ENCODE measurements at regions of chr11 and their contacts with region 1.

Region 1: GRCh38 chr11:33039274-33040032 is at the start of gene TCP11L1:
- DNase-seq: peak; percentile 89
- H3K4me3 Mint-ChIP-seq: peak within 1 kb of the TSS; percentile 87
- H3K27ac Mint-ChIP-seq: peak within 1 kb of the TSS; percentile 92
- H3K4me1 Mint-ChIP-seq: peaks cover 37% of the 10 kb centered on the region
- H3K27me3 Mint-ChIP-seq: peaks cover 10% of the 10 kb centered on the region
- total RNA-seq, gene TCP11L1: 10.0 to 11.4 TPM

Region 2: DNA sequence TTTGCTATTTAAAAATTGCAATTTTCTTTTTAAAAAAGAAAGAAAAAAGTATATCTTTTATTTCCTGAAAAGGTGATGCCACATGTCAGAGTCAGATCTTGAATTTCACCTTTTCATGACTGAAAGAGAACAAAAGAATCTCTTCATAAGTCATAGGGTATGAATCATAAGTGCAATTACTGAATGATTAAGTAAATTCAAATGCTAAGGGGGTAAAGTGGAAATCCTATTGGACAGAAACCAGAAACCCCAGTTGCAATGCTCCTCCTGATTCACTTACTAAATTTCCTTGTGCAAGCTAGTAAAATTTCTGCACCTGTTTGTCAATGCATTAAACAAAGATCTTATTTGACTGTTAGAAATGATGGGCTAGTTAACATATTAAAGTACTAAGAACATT is 217.9 kb before region 1 on chr11:
- CTCF ChIA-PET with region 1: no interaction called
- POLR2A ChIA-PET with region 1: no interaction called
- intact Hi-C with region 1: loop called (anchors 1 kb)
- DNase-seq: no peak
- H3K4me3 Mint-ChIP-seq: no peak overlapping the region
- H3K27ac Mint-ChIP-seq: no peak overlapping the region
- H3K4me1 Mint-ChIP-seq: peaks cover 20% of the 10 kb centered on the region
- H3K27me3 Mint-ChIP-seq: peaks cover 7% of the 10 kb centered on the region

Region 3: DNA sequence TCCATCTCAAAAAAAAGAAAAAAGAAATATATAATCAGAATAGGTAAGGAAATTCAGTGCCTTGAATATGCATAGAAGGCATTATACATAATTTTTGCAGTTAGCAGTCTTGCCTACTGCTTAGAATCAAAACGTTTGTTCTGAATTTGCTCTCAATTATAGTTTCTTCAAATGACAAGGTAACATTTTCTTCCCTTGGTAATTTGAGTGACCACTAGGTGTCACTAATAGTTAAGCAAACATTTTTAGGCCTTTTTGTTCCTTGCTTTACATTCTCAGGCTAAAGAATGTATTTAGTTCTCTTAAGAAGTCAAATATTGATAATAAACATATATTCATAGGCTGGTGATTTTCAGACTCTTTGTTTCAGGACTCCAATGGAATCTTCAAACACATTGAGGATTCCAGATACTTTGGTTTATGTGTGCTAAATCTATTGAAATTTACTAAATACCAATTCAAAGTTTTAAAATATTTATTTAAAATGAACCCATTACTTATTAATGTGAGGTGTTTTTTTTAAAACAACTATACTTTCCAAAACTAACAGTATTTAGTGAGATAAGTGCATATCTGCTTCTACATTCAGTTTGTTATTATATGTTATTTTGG is 78.8 kb before region 1 on chr11:
- CTCF ChIA-PET with region 1: interaction called, 5 read pairs
- POLR2A ChIA-PET with region 1: no interaction called
- intact Hi-C with region 1: loop called (anchors 1 kb)
- DNase-seq: no peak
- H3K4me3 Mint-ChIP-seq: no peak overlapping the region
- H3K27ac Mint-ChIP-seq: no peak overlapping the region
- H3K4me1 Mint-ChIP-seq: peaks cover 9% of the 10 kb centered on the region
- H3K27me3 Mint-ChIP-seq: no peaks in the 10 kb centered on the region

Region 4: DNA sequence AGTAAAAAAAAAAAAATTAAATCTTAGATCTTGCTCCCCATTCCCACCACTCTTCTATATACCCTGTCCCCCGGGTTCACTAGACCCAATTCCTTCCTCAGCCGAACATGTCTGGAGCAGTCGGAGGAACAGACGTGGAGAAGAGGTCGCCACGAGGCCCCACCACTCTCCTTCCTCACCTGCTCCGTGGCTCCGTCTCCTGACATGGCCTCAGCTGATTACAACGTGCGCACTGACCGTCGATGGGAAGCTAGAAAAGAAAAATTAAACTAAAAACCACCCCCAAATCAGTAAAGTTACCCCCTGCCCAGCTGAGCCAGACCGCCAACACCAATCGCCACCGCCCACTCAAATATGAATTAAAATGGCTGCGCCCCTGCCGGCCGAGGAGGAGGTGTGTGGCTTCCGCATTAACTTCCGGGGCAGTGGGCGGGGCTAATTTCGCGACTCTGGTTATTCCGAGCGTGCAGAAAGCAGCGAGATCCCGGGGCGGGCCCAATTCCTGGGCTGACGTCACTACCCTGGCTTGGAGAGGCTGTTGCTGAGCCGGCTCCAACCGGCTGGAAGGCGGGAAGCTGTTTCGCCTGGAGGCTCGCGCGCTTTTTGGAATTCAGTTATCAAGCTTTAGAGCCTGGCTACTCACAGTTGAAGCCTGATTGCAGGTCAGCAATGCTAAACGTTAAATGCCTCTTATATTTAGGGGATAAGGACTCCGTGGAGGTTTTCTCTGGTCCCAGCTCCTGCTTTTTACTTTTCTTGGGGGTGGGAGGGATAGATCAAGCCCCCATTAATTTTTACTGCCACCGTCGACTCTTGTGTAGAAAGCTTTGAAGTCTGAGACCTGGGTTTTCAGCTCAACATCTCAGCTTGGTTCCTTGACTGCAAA is 121.9 kb after region 1 on chr11 and contains the start of gene CSTF3:
- CTCF ChIA-PET with region 1: no interaction called
- POLR2A ChIA-PET with region 1: interaction called, 5 read pairs
- intact Hi-C with region 1: loop called (anchors 5 kb)
- DNase-seq: peak; percentile 99
- H3K4me3 Mint-ChIP-seq: peak within 1 kb of the TSS; percentile 99
- H3K27ac Mint-ChIP-seq: peak within 1 kb of the TSS; percentile 95
- H3K4me1 Mint-ChIP-seq: peaks cover 40% of the 10 kb centered on the region
- H3K27me3 Mint-ChIP-seq: no peaks in the 10 kb centered on the region
- total RNA-seq, gene CSTF3: 31.7 to 33.7 TPM

Region 5: DNA sequence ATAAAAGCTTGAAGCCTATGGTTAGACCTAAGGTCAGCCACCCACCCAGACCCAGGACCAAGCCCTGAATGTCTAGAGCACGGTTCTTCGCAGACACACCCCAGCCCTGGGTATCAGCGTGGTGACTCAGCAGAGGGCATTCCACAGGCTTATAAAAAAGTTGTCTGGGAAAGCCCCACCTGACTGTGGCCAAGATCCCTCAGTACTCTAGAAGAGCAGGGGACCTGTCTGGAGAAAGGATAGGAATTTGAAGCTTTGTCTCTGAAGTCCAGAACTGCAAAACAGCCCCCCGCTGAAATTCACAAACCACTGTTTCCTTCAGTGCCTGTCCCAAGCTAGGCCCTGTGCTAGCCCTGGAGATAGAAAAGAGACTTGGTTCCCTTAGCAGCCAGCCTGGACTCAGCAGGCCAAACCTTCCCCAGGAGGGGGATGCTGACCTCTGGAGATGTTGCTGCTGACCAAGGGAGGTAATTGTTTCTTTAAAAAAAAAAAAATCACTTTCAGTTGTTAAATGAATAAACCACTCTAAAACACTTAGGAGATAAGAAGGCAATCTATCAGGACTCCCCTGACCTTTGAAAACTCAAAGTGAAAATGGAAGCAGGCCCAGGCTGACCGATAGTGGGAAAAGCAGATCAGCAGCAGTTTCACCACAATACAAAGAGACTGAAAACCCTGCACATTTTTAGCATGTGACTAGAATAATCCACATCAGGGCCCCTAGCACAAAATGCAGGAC is 1204.4 kb after region 1 on chr11:
- CTCF ChIA-PET with region 1: no interaction called
- POLR2A ChIA-PET with region 1: no interaction called
- intact Hi-C with region 1: loop called (anchors 5 kb)
- DNase-seq: peak; percentile 83
- H3K4me3 Mint-ChIP-seq: no peak overlapping the region
- H3K27ac Mint-ChIP-seq: peak overlapping the region; percentile 38
- H3K4me1 Mint-ChIP-seq: peaks cover 74% of the 10 kb centered on the region
- H3K27me3 Mint-ChIP-seq: peaks cover 5% of the 10 kb centered on the region